AG04449 (cell line): ENCODE measurements at regions of chr5 and their contacts with region 1.

Region 1: DNA sequence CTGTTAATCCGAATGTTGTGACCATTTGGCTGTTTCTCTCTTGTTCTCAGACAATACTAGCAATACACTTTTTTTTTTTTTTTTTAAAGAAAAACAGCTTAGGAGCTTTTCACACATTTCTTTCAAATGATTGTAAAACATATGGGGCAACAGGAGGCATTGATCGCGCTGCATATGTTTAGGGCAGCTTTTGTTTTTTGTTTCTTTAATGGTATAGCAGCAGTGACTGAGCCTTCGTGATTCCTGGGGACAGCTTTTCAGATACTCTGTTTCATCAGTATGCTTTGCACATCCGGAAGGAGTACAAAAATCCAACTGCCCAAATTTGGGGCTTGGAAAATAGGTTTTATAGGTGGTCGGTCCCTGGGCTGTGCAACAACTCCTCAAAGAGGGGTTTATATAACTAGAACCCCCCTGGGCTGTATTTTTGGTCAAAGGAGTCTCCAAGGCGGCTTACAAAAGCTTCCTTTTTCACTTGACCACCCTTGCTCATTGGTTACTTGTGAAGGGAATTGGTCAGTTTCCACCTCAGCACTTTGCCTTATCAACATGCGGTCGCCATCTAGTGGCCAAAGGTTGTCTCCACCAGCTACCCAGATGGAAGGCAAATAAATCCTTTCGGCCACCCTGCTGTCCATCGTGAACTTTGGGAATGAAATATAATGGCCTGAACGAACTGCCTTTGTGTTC is 91.8 kb downstream of the PDE6A start:
- DNase-seq: peak; percentile 29
- H3K4me3 ChIP-seq: no peak overlapping the region
- CTCF ChIP-seq: peak; percentile 86

Region 2: GRCh38 chr5:149636851-149637246 is 215.9 kb before region 1 on chr5:
- CTCF ChIA-PET with region 1: interaction called, 143 read pairs
- POLR2A ChIA-PET with region 1: no interaction called
- DNase-seq: no peak
- H3K4me3 ChIP-seq: no peak overlapping the region
- CTCF ChIP-seq: peak; percentile 86

Region 3: DNA sequence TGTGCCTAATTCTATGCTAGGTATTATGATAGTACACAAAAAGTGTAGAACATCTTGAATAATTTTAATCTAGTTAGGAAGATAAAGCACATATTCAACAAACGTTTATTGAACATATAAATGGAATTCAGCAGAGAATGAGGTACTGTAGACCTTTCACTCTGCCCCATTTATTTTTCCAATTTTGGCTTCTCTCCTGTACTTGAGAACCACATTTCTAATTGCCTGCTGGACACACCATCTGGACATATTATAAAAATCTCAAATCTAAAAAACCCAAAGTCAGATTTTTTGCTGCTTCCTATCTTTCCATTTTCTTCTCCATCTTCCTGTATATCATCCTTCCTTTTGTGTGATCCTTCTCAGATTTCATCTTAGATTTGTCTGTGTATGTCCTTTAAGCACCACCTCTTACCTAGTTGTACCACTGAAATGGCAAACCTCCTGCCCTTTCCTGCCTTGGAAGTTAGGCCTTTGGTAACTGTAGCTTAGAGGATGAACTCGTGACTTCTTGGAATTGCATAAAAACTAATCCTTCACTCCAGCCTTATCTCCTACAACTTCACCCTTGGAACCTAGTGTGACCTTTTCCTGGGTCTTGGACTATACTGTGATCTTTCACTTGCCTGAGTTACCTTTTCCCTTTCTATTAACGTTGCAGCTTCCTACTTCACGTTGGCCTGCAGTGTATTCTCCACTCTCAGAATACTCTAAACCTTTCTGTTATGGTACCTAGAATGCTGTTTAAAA is 116.6 kb after region 1 on chr5:
- CTCF ChIA-PET with region 1: interaction called, 26 read pairs
- POLR2A ChIA-PET with region 1: no interaction called
- DNase-seq: no peak
- H3K4me3 ChIP-seq: no peak overlapping the region
- CTCF ChIP-seq: no peak